ENCODE measurements at regions of chr19 and their contacts with region 1.

Region 1: DNA sequence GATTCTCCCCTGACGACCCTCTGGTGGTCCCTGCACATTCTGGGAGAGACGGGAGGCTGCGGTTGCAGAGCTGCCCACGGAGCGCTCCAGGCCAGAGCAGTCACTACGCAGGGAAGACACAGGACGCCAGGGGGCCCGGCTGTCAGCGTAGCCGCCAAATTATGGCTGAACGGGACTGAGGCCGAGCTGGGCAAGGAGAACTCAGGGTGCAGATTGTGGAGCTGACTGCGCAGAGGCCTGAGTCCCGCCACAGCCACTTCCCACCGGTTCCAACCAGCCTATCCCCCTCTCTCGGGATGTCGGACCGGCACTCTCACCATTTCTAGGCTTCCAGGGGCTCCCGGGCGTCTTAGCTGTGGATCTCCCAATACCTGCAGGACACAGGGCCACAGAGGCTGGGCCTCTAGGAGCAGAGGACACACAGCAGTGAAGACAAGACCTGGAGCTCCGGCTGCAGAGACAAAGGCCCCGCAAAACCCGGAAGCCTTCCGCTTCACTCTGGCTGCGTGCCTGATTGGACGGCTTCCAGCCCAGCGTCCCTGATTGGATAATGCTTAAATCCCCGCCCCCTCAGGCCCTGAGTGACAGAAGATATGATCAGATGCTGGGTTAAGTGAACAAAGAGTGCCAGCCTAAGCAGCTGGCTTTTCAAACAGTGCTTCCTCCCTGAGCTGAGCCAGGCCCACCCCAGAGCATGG is at the start of gene ZNF737:
- DNase-seq: peak; percentile 86 to 97 (median 91)
- ATAC-seq: peak; percentile 96
- H3K4me3 ChIP-seq: peak within 1 kb of the TSS; percentile 82
- H3K4me3 Mint-ChIP-seq: peak within 1 kb of the TSS; percentile 100
- H3K27ac ChIP-seq: peak within 1 kb of the TSS; percentile 80 to 88
- H3K27ac Mint-ChIP-seq: peak within 1 kb of the TSS; percentile 98
- H3K4me1 ChIP-seq: peaks cover 10% of the 10 kb centered on the region
- H3K4me1 Mint-ChIP-seq: peaks cover 29% of the 10 kb centered on the region
- H3K27me3 ChIP-seq: no peaks in the 10 kb centered on the region
- H3K27me3 Mint-ChIP-seq: no peaks in the 10 kb centered on the region
- CTCF ChIP-seq: peak; percentile 30
- total RNA-seq, gene ZNF737: 11.0 to 11.7 TPM

Region 2: GRCh38 chr19:20077791-20078463 is 487.5 kb before region 1 on chr19 and contains the start of gene ZNF90:
- CTCF ChIA-PET with region 1: no interaction called
- POLR2A ChIA-PET with region 1: interaction called, 10 read pairs
- intact Hi-C with region 1: no loop called
- DNase-seq: peak; percentile 69 to 94 (median 80)
- ATAC-seq: peak; percentile 100
- H3K4me3 ChIP-seq: peak within 1 kb of the TSS; percentile 60
- H3K4me3 Mint-ChIP-seq: peak within 1 kb of the TSS; percentile 92
- H3K27ac ChIP-seq: no peak within 1 kb of the TSS
- H3K27ac Mint-ChIP-seq: peak within 1 kb of the TSS; percentile 55
- H3K4me1 ChIP-seq: peaks cover 14% of the 10 kb centered on the region
- H3K4me1 Mint-ChIP-seq: peaks cover 20% of the 10 kb centered on the region
- H3K27me3 ChIP-seq: no peaks in the 10 kb centered on the region
- H3K27me3 Mint-ChIP-seq: no peaks in the 10 kb centered on the region
- CTCF ChIP-seq: no peak
- total RNA-seq, gene ZNF90: 2.9 to 3.7 TPM

Region 3: DNA sequence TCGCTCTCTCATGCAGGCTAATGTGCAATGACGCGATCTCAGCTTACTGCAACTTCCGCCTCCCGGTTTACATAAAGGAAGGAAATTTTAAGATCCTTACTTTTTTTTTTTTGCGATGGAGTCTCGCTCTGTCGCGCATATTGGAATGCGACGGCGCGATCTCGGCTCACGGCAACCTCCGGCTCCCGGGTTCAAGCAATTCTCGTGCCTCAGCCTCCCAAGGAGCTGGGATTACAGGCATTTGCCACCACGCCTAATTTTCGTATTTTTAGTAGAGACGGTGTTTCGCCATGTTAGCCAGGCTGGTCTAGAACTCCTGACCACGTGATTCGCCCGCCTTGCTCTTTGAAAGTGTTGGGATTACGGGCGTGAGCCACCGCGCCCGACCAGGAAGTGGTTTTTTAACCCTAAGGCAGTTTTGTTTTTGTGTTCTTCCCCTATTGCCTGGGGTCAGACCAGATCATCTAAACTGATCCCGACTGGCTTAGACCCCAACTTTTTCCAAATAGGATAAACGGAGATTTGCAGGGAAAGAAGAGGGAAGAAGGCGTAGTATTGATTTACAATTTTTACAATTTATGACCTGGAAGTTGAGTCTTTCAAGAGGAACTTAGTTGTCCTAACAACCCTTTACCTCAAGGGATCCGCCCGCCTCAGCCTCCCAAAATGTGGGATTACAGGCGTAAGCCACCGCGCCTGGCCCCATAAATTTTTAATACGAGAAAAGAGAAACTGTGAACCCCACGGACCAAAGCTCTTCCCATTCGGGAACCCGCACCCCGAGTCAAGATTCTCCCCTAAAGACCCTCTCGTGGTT is 141.9 kb before region 1 on chr19:
- CTCF ChIA-PET with region 1: no interaction called
- POLR2A ChIA-PET with region 1: interaction called, 49 read pairs
- intact Hi-C with region 1: loop called (anchors 2 to 5 kb)
- DNase-seq: peak in 9 of 14 experiments; percentile 6 to 64 (median 34)
- ATAC-seq: no peak
- H3K4me3 ChIP-seq: peak overlapping the region; percentile 83
- H3K4me3 Mint-ChIP-seq: peak overlapping the region; percentile 97
- H3K27ac ChIP-seq: peak overlapping the region; percentile 57 to 65
- H3K27ac Mint-ChIP-seq: peak overlapping the region; percentile 90
- H3K4me1 ChIP-seq: peaks cover 9% of the 10 kb centered on the region
- H3K4me1 Mint-ChIP-seq: peaks cover 15% of the 10 kb centered on the region
- H3K27me3 ChIP-seq: no peaks in the 10 kb centered on the region
- H3K27me3 Mint-ChIP-seq: no peaks in the 10 kb centered on the region
- CTCF ChIP-seq: no peak

Region 4: GRCh38 chr19:20776083-20777076 is 210.9 kb after region 1 on chr19 and contains the start of gene ZNF66:
- CTCF ChIA-PET with region 1: no interaction called
- POLR2A ChIA-PET with region 1: interaction called, 42 read pairs
- intact Hi-C with region 1: loop called in 1 of 2 experiments (anchors 2 kb)
- DNase-seq: peak; percentile 90 to 98 (median 93)
- ATAC-seq: peak; percentile 97
- H3K4me3 ChIP-seq: peak within 1 kb of the TSS; percentile 85
- H3K4me3 Mint-ChIP-seq: peak within 1 kb of the TSS; percentile 97
- H3K27ac ChIP-seq: peak within 1 kb of the TSS; percentile 70 to 74
- H3K27ac Mint-ChIP-seq: peak within 1 kb of the TSS; percentile 91
- H3K4me1 ChIP-seq: peaks cover 6% of the 10 kb centered on the region
- H3K4me1 Mint-ChIP-seq: peaks cover 31% of the 10 kb centered on the region
- H3K27me3 ChIP-seq: no peaks in the 10 kb centered on the region
- H3K27me3 Mint-ChIP-seq: no peaks in the 10 kb centered on the region
- CTCF ChIP-seq: no peak
- total RNA-seq, gene ZNF66: 6.4 to 7.4 TPM

Region 5: GRCh38 chr19:21141787-21142464 is 576.5 kb after region 1 on chr19 and contains the start of gene ZNF431:
- CTCF ChIA-PET with region 1: no interaction called
- POLR2A ChIA-PET with region 1: interaction called, 11 read pairs
- intact Hi-C with region 1: no loop called
- DNase-seq: peak; percentile 79 to 96 (median 84)
- ATAC-seq: peak; percentile 99
- H3K4me3 ChIP-seq: peak within 1 kb of the TSS; percentile 67
- H3K4me3 Mint-ChIP-seq: peak within 1 kb of the TSS; percentile 95
- H3K27ac ChIP-seq: peak within 1 kb of the TSS; percentile 25 to 37
- H3K27ac Mint-ChIP-seq: peak within 1 kb of the TSS; percentile 91
- H3K4me1 ChIP-seq: peaks cover 8% of the 10 kb centered on the region
- H3K4me1 Mint-ChIP-seq: peaks cover 45% of the 10 kb centered on the region
- H3K27me3 ChIP-seq: no peaks in the 10 kb centered on the region
- H3K27me3 Mint-ChIP-seq: no peaks in the 10 kb centered on the region
- CTCF ChIP-seq: no peak
- total RNA-seq, gene ZNF431: 24.6 to 25.9 TPM

Region 6: GRCh38 chr19:21767065-21767800 is 1201.8 kb after region 1 on chr19 and contains the start of gene ZNF100:
- CTCF ChIA-PET with region 1: no interaction called
- POLR2A ChIA-PET with region 1: interaction called, 11 read pairs
- intact Hi-C with region 1: no loop called
- DNase-seq: peak; percentile 73 to 92 (median 82)
- ATAC-seq: peak; percentile 98
- H3K4me3 ChIP-seq: peak within 1 kb of the TSS; percentile 94
- H3K4me3 Mint-ChIP-seq: peak within 1 kb of the TSS; percentile 95
- H3K27ac ChIP-seq: peak within 1 kb of the TSS; percentile 44 to 52
- H3K27ac Mint-ChIP-seq: peak within 1 kb of the TSS; percentile 87
- H3K4me1 ChIP-seq: peaks cover 13% of the 10 kb centered on the region
- H3K4me1 Mint-ChIP-seq: peaks cover 45% of the 10 kb centered on the region
- H3K27me3 ChIP-seq: no peaks in the 10 kb centered on the region
- H3K27me3 Mint-ChIP-seq: no peaks in the 10 kb centered on the region
- CTCF ChIP-seq: no peak
- total RNA-seq, gene ZNF100: 10.8 to 11.0 TPM

Measured in CD4-positive, alpha-beta T cell (primary cell).